ENCODE measurements at regions of chr4 and their contacts with region 1.

Region 1: DNA sequence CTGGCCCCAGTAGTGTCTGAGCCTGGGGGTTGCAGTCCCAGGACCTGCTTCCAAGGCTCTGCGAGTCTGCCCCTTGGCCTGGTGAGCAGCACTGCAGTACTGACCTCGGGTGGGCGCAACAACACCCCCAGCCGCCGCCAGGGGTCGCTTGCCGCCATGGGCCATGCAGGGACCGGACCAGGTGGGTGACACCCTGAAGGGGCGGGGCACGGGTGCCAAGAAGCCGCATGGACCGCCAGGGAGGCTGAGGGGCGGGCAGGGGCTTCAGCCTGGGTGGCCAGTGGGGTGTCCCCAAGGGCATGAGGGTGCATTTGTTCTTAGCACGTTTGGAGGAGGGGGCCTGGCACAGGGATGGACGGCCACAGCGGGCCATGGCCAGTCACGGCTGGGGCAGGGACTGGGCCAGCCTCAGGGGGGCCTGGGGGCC is 25.0 kb downstream of the TACC3 start:
- DNase-seq: peak; percentile 46
- ATAC-seq: peak; percentile 83
- H3K4me3 ChIP-seq: no peak overlapping the region
- H3K27ac ChIP-seq: no peak overlapping the region; the same call in 1 of the 2 replicates
- H3K4me1 ChIP-seq: peaks cover 0 to 17% of the 10 kb centered on the region in 2 experiments; a peak in 1 of 4 replicates
- H3K27me3 ChIP-seq: no peaks in the 10 kb centered on the region
- CTCF ChIP-seq: peak; percentile 86 to 95 (median 92)
- POLR2A ChIP-seq: no peak
- RAD21 ChIP-seq: peak; percentile 74

Region 2: GRCh38 chr4:1809754-1810511 is 63.7 kb after region 1 on chr4:
- CTCF ChIA-PET with region 1: interaction called, 43 read pairs
- POLR2A ChIA-PET with region 1: no interaction called
- RAD21 ChIA-PET with region 1: interaction called, 7 to 8 read pairs
- intact Hi-C with region 1: loop called (anchors 1 kb)
- DNase-seq: peak; percentile 34
- ATAC-seq: peak; percentile 92
- H3K4me3 ChIP-seq: no peak overlapping the region
- H3K27ac ChIP-seq: peak overlapping the region; percentile 3; the same call in 1 of the 2 replicates
- H3K4me1 ChIP-seq: peaks cover 0 to 5% of the 10 kb centered on the region in 2 experiments; a peak in 1 of 4 replicates
- H3K27me3 ChIP-seq: no peaks in the 10 kb centered on the region
- CTCF ChIP-seq: peak; percentile 89 to 98 (median 95)
- POLR2A ChIP-seq: no peak
- RAD21 ChIP-seq: peak; percentile 97

Region 3: DNA sequence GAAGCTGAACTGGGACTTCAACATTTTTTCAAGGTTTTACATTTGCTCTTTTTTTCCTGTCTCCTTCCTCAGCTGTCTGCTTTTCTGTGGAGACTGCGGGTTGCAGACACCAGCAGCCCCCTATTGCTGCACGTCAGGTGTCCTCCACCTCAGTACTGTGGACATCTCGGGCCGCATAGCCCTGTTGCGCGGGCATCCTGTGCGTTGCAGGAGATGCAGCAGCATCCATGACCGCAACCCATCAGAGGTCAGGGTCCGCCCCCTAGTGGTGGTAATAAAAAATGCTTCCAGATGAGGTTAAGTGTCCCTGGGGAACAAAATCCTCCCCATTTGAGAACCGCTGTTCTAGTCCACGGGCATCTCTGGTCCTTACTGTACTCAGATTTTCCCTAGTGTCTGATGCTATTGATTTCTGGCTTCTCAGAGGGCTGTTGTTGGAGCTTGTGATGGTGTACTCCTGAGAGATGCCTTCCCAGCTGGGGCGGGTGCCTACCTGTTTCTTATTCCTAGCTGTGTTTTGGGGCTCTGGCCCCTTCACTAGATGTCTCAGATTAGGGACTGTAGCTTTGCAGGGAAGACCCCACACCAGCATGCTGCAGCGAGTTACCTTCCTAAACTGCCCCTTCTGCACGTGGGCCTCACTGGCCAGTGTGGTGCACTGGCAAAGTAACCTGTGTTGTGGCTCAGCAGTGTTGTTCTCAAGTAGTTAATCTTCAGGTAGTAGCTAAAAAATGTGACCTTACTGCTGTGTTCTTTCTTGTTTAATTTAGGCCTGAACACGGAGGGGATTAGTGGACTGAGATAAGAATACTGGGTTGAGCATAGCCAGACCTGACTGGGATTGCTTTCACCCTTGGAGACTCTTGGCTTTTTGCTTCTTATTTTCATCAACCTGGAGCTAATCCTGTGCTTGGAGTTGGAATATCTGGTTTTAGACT is 153.1 kb after region 1 on chr4:
- CTCF ChIA-PET with region 1: interaction called, 7 read pairs
- POLR2A ChIA-PET with region 1: no interaction called
- RAD21 ChIA-PET with region 1: no interaction called
- intact Hi-C with region 1: loop called (anchors 1 kb)
- DNase-seq: peak; percentile 48
- ATAC-seq: peak; percentile 94
- H3K4me3 ChIP-seq: no peak overlapping the region
- H3K27ac ChIP-seq: no peak overlapping the region; the same call in 1 of the 2 replicates
- H3K4me1 ChIP-seq: peaks cover 0 to 6% of the 10 kb centered on the region in 2 experiments; a peak in 2 of 4 replicates
- H3K27me3 ChIP-seq: no peaks in the 10 kb centered on the region
- CTCF ChIP-seq: peak; percentile 61 to 89 (median 75); a peak in 5 of 6 replicates
- POLR2A ChIP-seq: no peak
- RAD21 ChIP-seq: peak; percentile 83

Region 4: DNA sequence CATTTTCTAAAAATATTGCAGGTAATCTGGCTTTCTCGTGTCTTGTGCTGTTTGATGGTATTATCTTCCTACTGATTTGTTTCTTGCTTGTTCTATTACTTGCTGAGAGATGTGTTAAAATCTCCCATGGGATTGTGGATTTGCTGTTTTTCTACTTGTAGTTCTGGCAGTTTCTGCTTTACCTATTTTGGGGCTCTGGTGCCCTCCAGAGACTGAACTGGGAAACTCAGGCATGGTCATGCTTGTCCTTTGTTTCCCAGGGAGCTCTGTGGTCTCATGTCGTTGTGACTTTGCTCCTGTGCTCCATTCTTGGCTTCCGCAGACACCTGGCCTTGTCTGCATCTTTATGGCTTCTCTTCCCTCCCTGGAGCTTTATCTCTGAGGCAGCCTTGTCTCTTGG is 164.4 kb after region 1 on chr4:
- CTCF ChIA-PET with region 1: interaction called, 13 read pairs
- POLR2A ChIA-PET with region 1: no interaction called
- RAD21 ChIA-PET with region 1: no interaction called
- intact Hi-C with region 1: loop called (anchors 2 kb)
- DNase-seq: no peak
- ATAC-seq: peak; percentile 87
- H3K4me3 ChIP-seq: no peak overlapping the region
- H3K27ac ChIP-seq: peak overlapping the region; percentile 36; the same call in 1 of the 2 replicates
- H3K4me1 ChIP-seq: peaks cover 5 to 33% of the 10 kb centered on the region in 2 experiments; a peak in 2 of 4 replicates
- H3K27me3 ChIP-seq: no peaks in the 10 kb centered on the region
- CTCF ChIP-seq: peak; percentile 48 to 64 (median 62); a peak in 5 of 6 replicates
- POLR2A ChIP-seq: no peak
- RAD21 ChIP-seq: peak; percentile 70

Region 5: GRCh38 chr4:2059034-2059725 is 312.9 kb after region 1 on chr4 and contains the start of gene NAT8L:
- CTCF ChIA-PET with region 1: no interaction called
- POLR2A ChIA-PET with region 1: no interaction called
- RAD21 ChIA-PET with region 1: no interaction called
- intact Hi-C with region 1: no loop called
- DNase-seq: peak; percentile 21
- ATAC-seq: peak; percentile 78
- H3K4me3 ChIP-seq: peak within 1 kb of the TSS; percentile 45 to 62
- H3K27ac ChIP-seq: peak within 1 kb of the TSS; percentile 68; the same call in 1 of the 2 replicates
- H3K4me1 ChIP-seq: peaks cover 0 to 16% of the 10 kb centered on the region in 2 experiments; a peak in 2 of 4 replicates
- H3K27me3 ChIP-seq: no peaks in the 10 kb centered on the region
- CTCF ChIP-seq: no peak
- POLR2A ChIP-seq: no peak
- RAD21 ChIP-seq: no peak
- total RNA-seq, gene NAT8L: 9.2 TPM

Region 6: GRCh38 chr4:2186133-2186864 is 440.0 kb after region 1 on chr4:
- CTCF ChIA-PET with region 1: no interaction called
- POLR2A ChIA-PET with region 1: no interaction called
- RAD21 ChIA-PET with region 1: no interaction called
- intact Hi-C with region 1: loop called (anchors 2 kb)
- DNase-seq: peak; percentile 52
- ATAC-seq: peak; percentile 99
- H3K4me3 ChIP-seq: no peak overlapping the region
- H3K27ac ChIP-seq: no peak overlapping the region
- H3K4me1 ChIP-seq: no peaks in the 10 kb centered on the region
- H3K27me3 ChIP-seq: no peaks in the 10 kb centered on the region
- CTCF ChIP-seq: peak; percentile 73 to 89 (median 83)
- POLR2A ChIP-seq: no peak
- RAD21 ChIP-seq: peak; percentile 95